ENCODE measurements at regions of chr9 and their contacts with region 1.

Region 1: DNA sequence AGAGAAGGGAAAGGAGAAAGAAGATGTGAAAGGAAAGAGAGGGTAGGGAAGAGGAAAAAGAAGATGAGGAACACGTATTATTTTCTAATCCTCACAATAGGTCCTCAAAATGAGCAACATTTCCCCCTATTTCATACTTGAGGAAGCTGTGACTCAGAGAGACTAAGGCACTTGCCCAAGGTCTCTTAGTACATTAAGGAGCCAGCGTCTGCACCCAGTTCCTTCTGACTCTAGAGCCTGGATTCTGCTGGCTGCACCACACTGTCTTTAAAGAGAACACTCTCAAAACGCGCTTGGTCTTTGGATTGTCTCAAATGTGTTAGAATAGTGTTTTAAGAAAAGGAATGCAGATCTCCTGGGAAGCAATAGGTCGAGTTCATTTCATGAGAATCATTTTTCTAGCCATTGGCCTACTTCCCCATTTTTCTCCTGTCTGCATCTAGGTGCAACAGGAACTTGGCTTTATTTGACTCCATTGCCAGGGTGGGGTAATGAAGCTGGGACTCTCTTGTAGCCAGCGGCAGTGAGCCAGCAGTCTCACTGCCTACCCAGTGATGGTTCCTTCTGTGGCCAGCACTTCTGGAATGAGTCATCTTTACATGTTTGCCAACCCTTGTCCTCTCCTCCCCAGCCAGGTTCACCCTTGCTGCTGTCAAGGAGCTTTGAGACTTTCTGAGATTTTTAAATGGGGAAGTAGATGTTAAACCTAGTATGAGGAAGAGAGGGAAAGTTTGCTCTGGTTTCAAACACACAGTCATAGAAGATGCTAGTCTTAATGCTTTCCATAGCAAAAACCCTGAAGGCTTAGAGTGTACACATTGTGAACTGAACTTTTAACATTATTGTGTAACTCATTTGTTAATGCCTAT is 82.7 kb downstream of the DOCK8 start:
- DNase-seq: peak; percentile 7 to 12
- ATAC-seq: peak in 7 of 8 donors; percentile 38 to 93 (median 53)
- H3K4me3 ChIP-seq: no peak overlapping the region
- H3K27ac ChIP-seq: peak overlapping the region in 1 of 10 donors; percentile 78
- H3K4me1 ChIP-seq: peaks cover 0 to 37% (median 0%) of the 10 kb centered on the region in 9 donors
- H3K27me3 ChIP-seq: peaks cover 0 to 21% (median 7%) of the 10 kb centered on the region in 7 donors
- CTCF ChIP-seq: no peak

Region 2: DNA sequence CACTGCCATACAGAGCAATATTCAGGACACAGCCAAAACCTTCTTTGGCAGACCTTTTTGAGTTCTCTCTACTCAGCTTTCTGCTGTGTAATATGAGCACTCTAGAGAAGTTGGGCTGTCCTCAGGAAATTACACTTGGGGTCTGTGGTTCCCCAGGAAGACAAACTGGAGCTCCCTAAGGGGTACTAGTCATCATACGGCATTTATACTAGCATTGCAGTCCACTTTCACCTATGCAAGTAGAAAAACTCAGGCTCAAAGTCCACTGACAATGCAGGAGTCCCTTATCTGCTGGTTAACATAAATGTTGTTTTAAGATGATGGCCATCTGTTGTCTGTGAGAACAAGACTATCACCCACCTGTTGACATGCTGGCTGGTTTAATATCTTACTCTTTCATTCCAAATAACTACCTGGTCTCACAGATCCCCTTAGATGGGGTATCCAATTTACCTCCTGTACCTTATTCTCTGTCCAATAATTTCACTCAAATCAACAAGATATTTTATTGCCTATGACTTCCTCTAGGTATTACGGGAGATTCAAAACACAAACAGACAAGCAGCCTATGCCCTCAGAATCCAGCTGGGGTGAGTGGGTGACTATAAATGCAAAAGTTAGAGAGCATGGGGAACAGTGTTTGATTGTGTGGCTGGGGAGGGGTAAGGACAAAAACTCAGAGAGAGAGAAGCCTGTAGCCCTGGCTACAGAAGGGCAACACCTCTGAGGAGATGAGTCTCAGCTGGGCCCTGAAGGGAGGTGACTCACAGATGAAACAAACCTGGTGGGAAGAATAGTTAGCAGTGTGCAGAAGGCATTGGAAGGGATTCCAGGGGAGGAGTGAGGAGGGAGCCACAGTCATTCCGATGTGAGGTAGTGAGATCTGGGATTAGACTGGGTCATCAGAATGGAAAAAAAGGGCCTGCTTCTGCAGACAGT is 72.5 kb before region 1 on chr9:
- intact Hi-C with region 1: loop called in 1 of 10 experiments (anchors 10 kb)
- DNase-seq: no peak
- ATAC-seq: no peak
- H3K4me3 ChIP-seq: no peak overlapping the region
- H3K27ac ChIP-seq: peak overlapping the region in 1 of 10 donors; percentile 12
- H3K4me1 ChIP-seq: peaks cover 0 to 73% (median 0%) of the 10 kb centered on the region in 9 donors
- H3K27me3 ChIP-seq: peaks cover 0 to 12% (median 0%) of the 10 kb centered on the region in 7 donors
- CTCF ChIP-seq: no peak

Region 3: DNA sequence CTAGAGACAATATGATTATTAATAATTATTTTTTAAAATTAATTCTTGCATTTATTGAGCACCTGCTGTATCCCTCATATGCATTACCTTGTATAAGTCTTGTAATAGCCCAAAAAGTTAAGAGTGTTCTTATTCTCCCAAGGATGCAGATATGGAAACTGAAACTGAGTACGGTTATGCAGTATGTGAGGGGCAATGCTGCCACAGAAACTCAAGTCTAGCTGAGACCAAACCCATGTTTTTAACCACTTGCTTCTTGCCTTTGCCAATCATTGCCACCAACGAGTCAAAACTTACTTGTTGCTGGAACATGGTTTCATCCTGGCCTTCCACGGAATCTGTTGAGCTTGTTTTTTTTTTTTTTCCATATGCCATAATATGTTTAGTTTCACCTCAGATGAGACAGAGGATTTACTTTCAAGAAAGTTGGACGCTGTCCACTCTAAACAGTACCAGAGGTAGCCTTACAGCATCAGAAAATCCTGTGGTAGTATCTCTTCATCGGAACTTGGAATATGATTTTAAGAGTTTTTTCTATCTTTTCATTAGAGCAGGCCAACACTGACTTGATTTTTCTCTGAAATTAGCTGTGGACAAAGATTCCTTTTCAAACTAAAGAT is 54.8 kb before region 1 on chr9:
- intact Hi-C with region 1: no loop called
- DNase-seq: no peak
- ATAC-seq: no peak
- H3K4me3 ChIP-seq: no peak overlapping the region
- H3K27ac ChIP-seq: no peak overlapping the region
- H3K4me1 ChIP-seq: peaks cover 0 to 7% (median 0%) of the 10 kb centered on the region in 9 donors
- H3K27me3 ChIP-seq: peaks cover 0 to 10% (median 0%) of the 10 kb centered on the region in 7 donors
- CTCF ChIP-seq: no peak

Region 4: DNA sequence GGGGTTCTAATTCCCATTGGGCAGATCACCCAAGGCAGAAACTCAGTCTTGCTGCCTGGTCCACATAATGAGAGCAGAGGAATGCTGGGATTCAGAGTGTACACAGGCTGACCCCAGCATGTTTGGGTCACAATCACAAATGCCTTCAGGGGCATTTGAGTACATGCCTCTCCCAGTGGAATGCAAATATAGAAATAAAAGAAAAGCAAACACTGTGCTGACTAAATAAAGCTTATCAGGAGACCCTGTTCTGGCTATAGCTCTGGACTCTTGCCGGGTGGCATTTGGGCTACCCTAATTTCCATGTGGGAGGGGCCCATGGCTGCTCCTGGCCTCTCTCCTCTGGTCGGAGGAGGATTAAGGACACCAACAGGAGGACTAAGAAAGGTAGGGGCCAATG is 38.7 kb after region 1 on chr9:
- intact Hi-C with region 1: no loop called
- DNase-seq: no peak
- ATAC-seq: peak in 1 of 8 donors; percentile 25
- H3K4me3 ChIP-seq: no peak overlapping the region
- H3K27ac ChIP-seq: no peak overlapping the region
- H3K4me1 ChIP-seq: peaks cover 0 to 4% (median 0%) of the 10 kb centered on the region in 9 donors
- H3K27me3 ChIP-seq: peaks cover 0 to 14% (median 0%) of the 10 kb centered on the region in 7 donors
- CTCF ChIP-seq: no peak